ENCODE measurements at regions of chr2 and their contacts with region 1.

Region 1: DNA sequence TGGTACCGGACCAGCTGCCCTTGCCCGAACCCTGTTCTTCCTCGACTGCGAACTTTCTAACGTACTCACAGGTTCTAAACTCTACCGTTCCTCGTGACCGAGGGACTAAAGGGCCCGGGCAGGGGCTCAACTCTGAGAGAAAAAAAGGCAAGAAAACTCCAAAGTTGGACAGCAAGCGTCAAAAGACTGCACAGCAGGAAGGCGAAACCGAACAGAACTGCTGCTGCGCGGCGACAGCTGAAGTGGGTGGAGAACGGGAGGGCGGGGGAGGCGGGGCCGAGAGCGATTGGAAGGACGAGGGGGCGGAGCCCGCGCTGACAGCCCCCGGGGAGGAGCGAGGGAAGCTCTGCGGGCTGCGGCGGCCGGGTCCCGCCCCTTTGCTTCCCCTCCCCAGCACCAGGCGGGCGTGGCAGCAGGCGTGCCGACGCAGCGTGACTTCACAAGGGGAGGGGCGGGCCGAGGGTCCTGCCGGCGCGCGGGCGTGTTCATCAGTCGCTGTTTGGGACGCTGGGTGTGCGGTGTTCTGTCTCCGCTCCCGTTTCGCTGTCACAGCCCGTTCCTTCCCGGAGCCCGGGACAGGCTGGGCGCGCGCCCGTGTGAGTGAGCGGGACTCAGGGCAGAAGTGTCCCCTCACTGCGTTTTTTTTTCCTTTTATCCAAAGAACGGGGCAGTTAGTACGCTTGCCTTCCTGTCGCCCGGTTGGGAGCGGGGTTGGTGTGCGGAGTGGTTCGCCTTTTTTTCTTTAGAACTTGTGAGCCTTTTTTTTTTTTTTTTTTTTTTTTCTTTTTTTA is at the start of gene NABP1:
- DNase-seq: peak; percentile 98 to 99 (median 99)
- ATAC-seq: peak; percentile 87
- H3K4me3 ChIP-seq: peak within 1 kb of the TSS; percentile 84 to 87
- H3K4me3 Mint-ChIP-seq: peak within 1 kb of the TSS; percentile 98
- H3K27ac ChIP-seq: peak within 1 kb of the TSS; percentile 95
- H3K27ac Mint-ChIP-seq: peak within 1 kb of the TSS; percentile 99
- H3K4me1 ChIP-seq: peaks cover 47% of the 10 kb centered on the region
- H3K4me1 Mint-ChIP-seq: peaks cover 66% of the 10 kb centered on the region
- H3K27me3 ChIP-seq: no peaks in the 10 kb centered on the region
- H3K27me3 Mint-ChIP-seq: no peaks in the 10 kb centered on the region
- CTCF ChIP-seq: no peak
- total RNA-seq, gene NABP1: 17.5 to 21.1 TPM

Region 2: GRCh38 chr2:190648289-190649034 is 1029.4 kb before region 1 on chr2:
- CTCF ChIA-PET with region 1: no interaction called
- POLR2A ChIA-PET with region 1: no interaction called
- intact Hi-C with region 1: loop called in 1 of 2 experiments (anchors 5 kb)
- DNase-seq: peak; percentile 80 to 97 (median 88)
- ATAC-seq: peak; percentile 81
- H3K4me3 ChIP-seq: peak overlapping the region; percentile 58 to 63
- H3K4me3 Mint-ChIP-seq: peak overlapping the region; percentile 84
- H3K27ac ChIP-seq: peak overlapping the region; percentile 63 to 84
- H3K27ac Mint-ChIP-seq: peak overlapping the region; percentile 88
- H3K4me1 ChIP-seq: peaks cover 26% of the 10 kb centered on the region
- H3K4me1 Mint-ChIP-seq: peaks cover 44% of the 10 kb centered on the region
- H3K27me3 ChIP-seq: no peaks in the 10 kb centered on the region
- H3K27me3 Mint-ChIP-seq: no peaks in the 10 kb centered on the region
- CTCF ChIP-seq: no peak

Region 3: DNA sequence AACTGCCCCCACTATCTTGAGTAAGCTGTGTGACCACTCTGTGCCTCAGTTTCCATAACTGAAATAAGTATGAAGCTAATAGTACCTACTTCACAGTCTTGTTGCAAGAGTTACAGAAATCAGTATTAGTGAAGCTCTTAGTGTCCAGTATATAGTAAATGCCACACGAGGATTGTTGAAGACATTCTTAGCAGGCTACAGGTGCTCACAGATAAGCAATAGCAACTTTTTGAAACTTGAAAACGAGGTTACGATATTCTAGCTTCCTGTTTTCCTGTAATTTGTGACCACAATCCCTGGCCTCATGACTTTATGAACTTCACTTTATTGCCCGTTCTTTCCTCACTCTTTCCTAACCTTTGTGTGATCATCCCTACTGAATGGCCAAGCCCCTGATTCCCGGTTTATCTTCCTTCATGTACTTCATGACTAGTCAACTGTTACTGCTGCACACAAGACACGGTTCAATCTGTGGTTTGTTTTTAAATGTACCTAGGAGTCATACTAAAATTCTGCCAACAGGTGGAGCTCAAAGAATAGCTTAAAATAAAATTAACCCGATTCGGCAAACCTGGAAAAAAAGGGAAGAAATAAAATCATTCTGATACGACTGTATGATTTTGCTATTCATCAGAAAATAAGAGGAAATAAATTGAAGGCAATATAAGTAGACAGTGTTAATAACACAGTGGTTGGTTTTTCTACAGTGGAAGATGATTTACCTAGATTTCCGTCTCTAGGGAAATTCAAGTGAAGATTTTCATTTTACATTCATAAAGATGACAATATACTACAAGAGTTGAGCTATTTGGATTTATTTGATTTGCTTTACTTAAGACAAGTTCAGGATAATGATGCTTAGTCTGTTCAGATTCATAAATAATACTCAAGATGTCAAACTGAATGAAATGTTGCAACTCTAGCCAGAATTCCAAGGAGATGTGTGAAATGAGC is 625.7 kb before region 1 on chr2:
- CTCF ChIA-PET with region 1: interaction called, 3 read pairs
- POLR2A ChIA-PET with region 1: no interaction called
- intact Hi-C with region 1: loop called in 1 of 2 experiments (anchors 10 kb)
- DNase-seq: peak in 3 of 9 experiments; percentile 60 to 77 (median 67)
- ATAC-seq: peak; percentile 72
- H3K4me3 ChIP-seq: no peak overlapping the region
- H3K4me3 Mint-ChIP-seq: no peak overlapping the region
- H3K27ac ChIP-seq: peak overlapping the region in 1 of 2 experiments; percentile 43
- H3K27ac Mint-ChIP-seq: no peak overlapping the region
- H3K4me1 ChIP-seq: peaks cover 18% of the 10 kb centered on the region
- H3K4me1 Mint-ChIP-seq: peaks cover 26% of the 10 kb centered on the region
- H3K27me3 ChIP-seq: no peaks in the 10 kb centered on the region
- H3K27me3 Mint-ChIP-seq: no peaks in the 10 kb centered on the region
- CTCF ChIP-seq: peak; percentile 99

Region 4: DNA sequence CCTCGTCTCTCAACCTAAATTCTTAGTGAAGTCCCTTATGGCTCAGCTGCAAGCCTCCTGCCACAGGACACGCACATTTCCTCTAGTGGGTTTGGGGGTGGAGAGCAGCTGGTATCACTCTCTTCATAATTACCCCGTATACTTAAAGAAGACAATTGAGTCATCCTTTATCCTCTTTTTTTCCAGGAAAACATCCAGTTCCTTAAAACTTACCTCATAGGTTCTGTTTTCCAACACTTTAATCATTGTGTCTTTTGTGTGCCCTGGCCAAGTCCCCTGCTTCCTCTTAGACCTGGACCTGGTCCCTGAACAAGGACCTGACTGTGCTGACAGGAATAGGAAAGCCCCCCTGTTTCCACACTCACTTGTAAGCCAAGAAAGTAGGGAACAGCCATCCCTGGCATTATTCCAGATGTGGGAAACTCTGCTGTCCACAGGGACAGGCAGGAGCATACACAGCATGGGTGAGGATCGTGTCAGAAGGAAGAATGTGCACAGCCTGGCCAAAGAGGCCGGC is 474.9 kb before region 1 on chr2:
- CTCF ChIA-PET with region 1: no interaction called
- POLR2A ChIA-PET with region 1: interaction called, 3 read pairs
- intact Hi-C with region 1: loop called in 1 of 2 experiments (anchors 5 kb)
- DNase-seq: peak in 3 of 9 experiments; percentile 16 to 61 (median 56)
- ATAC-seq: no peak
- H3K4me3 ChIP-seq: no peak overlapping the region
- H3K4me3 Mint-ChIP-seq: peak overlapping the region; percentile 8
- H3K27ac ChIP-seq: peak overlapping the region in 1 of 2 experiments; percentile 65
- H3K27ac Mint-ChIP-seq: peak overlapping the region; percentile 71
- H3K4me1 ChIP-seq: peaks cover 42% of the 10 kb centered on the region
- H3K4me1 Mint-ChIP-seq: peaks cover 51% of the 10 kb centered on the region
- H3K27me3 ChIP-seq: no peaks in the 10 kb centered on the region
- H3K27me3 Mint-ChIP-seq: no peaks in the 10 kb centered on the region
- CTCF ChIP-seq: no peak

Region 5: GRCh38 chr2:191322828-191323506 is 354.9 kb before region 1 on chr2:
- CTCF ChIA-PET with region 1: no interaction called
- POLR2A ChIA-PET with region 1: no interaction called
- intact Hi-C with region 1: no loop called
- DNase-seq: no peak
- ATAC-seq: no peak
- H3K4me3 ChIP-seq: no peak overlapping the region
- H3K4me3 Mint-ChIP-seq: no peak overlapping the region
- H3K27ac ChIP-seq: no peak overlapping the region
- H3K27ac Mint-ChIP-seq: no peak overlapping the region
- H3K4me1 ChIP-seq: peaks cover 15% of the 10 kb centered on the region
- H3K4me1 Mint-ChIP-seq: peaks cover 15% of the 10 kb centered on the region
- H3K27me3 ChIP-seq: no peaks in the 10 kb centered on the region
- H3K27me3 Mint-ChIP-seq: peaks cover 3% of the 10 kb centered on the region
- CTCF ChIP-seq: no peak

Region 6: GRCh38 chr2:191660575-191661388 is 17.1 kb before region 1 on chr2:
- CTCF ChIA-PET with region 1: no interaction called
- POLR2A ChIA-PET with region 1: interaction called, 6 read pairs
- intact Hi-C with region 1: loop called in 1 of 2 experiments (anchors 2 kb)
- DNase-seq: no peak
- ATAC-seq: no peak
- H3K4me3 ChIP-seq: no peak overlapping the region
- H3K4me3 Mint-ChIP-seq: no peak overlapping the region
- H3K27ac ChIP-seq: no peak overlapping the region
- H3K27ac Mint-ChIP-seq: no peak overlapping the region
- H3K4me1 ChIP-seq: no peaks in the 10 kb centered on the region
- H3K4me1 Mint-ChIP-seq: peaks cover 3% of the 10 kb centered on the region
- H3K27me3 ChIP-seq: no peaks in the 10 kb centered on the region
- H3K27me3 Mint-ChIP-seq: no peaks in the 10 kb centered on the region
- CTCF ChIP-seq: no peak

Measured in CD8-positive, alpha-beta T cell (primary cell).